MCF 10A (cell line): ENCODE measurements at regions of chr18 and their contacts with region 1.

Region 1: DNA sequence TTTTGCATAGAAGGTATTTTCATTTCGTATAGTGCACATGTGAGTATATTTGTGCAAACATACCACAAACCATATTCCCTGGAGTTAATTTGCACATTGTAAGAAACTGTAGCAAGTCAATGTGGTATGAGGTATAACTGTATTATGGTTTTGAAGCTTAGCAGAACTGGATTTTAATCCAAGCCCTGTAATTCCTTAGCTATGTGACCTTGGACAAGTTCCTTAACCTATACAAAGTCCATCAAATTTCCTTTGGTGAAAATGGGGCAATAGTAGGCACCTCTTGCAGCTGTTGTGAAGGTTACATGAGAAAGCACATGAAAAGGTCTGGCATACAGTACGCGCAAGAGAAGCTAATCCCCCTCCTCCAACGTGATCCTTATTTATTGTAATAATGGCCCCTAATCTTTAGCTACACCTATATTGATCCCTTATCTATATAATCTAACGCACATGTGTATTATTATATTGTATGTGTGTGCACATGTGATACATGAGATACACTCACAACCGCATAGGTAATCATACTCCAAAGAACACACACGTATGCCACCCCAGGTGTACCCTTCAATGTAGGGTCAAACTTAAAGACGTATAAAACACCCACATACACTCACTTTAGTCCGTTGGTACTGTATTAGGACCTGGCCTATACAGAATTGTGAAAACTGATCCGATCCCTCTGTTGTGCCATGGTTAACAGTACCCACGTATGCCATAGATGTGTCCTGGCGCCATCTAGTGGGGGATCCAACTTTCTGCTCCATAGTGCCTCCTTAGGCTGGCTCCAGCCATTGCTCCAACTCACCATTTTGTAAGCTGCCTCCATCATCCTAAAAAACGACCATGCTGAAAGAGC is 402.9 kb upstream of the SLC14A2 start:
- DNase-seq: peak; percentile 89
- H3K4me3 Mint-ChIP-seq: no peak overlapping the region
- H3K27ac Mint-ChIP-seq: no peak overlapping the region
- H3K4me1 Mint-ChIP-seq: no peaks in the 10 kb centered on the region
- H3K27me3 Mint-ChIP-seq: no peaks in the 10 kb centered on the region
- CTCF ChIP-seq: peak; percentile 99

Region 2: GRCh38 chr18:44437603-44438002 is 774.8 kb before region 1 on chr18:
- CTCF ChIA-PET with region 1: interaction called, 4 read pairs
- POLR2A ChIA-PET with region 1: no interaction called
- intact Hi-C with region 1: loop called (anchors 5 kb)
- DNase-seq: no peak
- H3K4me3 Mint-ChIP-seq: no peak overlapping the region
- H3K27ac Mint-ChIP-seq: no peak overlapping the region
- H3K4me1 Mint-ChIP-seq: no peaks in the 10 kb centered on the region
- H3K27me3 Mint-ChIP-seq: no peaks in the 10 kb centered on the region
- CTCF ChIP-seq: no peak

Region 3: GRCh38 chr18:44687421-44687820 is 525.0 kb before region 1 on chr18:
- CTCF ChIA-PET with region 1: interaction called, 15 read pairs
- POLR2A ChIA-PET with region 1: no interaction called
- intact Hi-C with region 1: no loop called
- DNase-seq: no peak
- H3K4me3 Mint-ChIP-seq: no peak overlapping the region
- H3K27ac Mint-ChIP-seq: no peak overlapping the region
- H3K4me1 Mint-ChIP-seq: peaks cover 9% of the 10 kb centered on the region
- H3K27me3 Mint-ChIP-seq: no peaks in the 10 kb centered on the region
- CTCF ChIP-seq: no peak

Region 4: GRCh38 chr18:44816050-44816449 is 396.4 kb before region 1 on chr18:
- CTCF ChIA-PET with region 1: no interaction called
- POLR2A ChIA-PET with region 1: no interaction called
- intact Hi-C with region 1: no loop called
- DNase-seq: no peak
- H3K4me3 Mint-ChIP-seq: no peak overlapping the region
- H3K27ac Mint-ChIP-seq: no peak overlapping the region
- H3K4me1 Mint-ChIP-seq: no peaks in the 10 kb centered on the region
- H3K27me3 Mint-ChIP-seq: no peaks in the 10 kb centered on the region
- CTCF ChIP-seq: no peak

Region 5: DNA sequence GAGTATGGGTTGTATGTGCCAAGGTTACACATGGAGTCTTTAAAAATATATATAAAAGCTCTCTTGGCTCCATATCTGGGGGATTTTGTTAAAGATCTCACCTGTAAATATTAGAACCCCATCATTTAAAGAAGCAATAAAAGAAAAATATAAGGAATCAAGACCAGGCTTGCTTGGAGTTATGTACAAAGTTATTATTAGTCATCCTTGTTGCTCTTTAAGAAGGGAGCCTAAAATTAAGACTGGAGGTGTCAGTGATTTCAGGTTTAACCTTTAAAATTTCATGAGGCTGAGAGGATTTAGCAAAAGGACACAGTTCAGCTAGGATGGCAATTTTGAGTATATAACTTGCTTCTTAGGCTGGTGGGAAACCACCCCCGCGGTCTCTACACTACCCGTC is 350.3 kb before region 1 on chr18:
- CTCF ChIA-PET with region 1: no interaction called
- POLR2A ChIA-PET with region 1: no interaction called
- intact Hi-C with region 1: no loop called
- DNase-seq: no peak
- H3K4me3 Mint-ChIP-seq: no peak overlapping the region
- H3K27ac Mint-ChIP-seq: no peak overlapping the region
- H3K4me1 Mint-ChIP-seq: peaks cover 6% of the 10 kb centered on the region
- H3K27me3 Mint-ChIP-seq: no peaks in the 10 kb centered on the region
- CTCF ChIP-seq: no peak

Region 6: DNA sequence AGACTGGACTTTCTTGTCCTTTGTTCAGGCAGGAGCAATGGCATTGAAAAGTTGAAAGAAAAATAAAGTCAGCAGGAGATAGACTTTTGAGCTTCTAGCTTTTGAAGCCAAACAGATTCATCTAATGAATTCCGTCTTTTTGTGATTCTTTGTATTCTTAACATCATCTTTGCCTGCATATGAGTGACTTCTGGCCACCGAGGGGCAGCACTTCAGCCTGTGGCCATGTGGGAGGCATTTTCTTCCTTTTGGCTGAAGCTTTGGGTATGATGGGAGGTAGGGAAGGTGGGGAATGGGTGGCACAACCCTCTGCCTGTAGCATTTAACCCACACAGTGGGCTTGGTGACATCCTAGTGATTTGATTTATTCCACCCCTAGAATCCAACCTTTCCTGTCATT is 311.1 kb before region 1 on chr18:
- CTCF ChIA-PET with region 1: interaction called, 11 read pairs
- POLR2A ChIA-PET with region 1: no interaction called
- intact Hi-C with region 1: loop called (anchors 1 kb)
- DNase-seq: peak; percentile 32
- H3K4me3 Mint-ChIP-seq: no peak overlapping the region
- H3K27ac Mint-ChIP-seq: no peak overlapping the region
- H3K4me1 Mint-ChIP-seq: peaks cover 15% of the 10 kb centered on the region
- H3K27me3 Mint-ChIP-seq: no peaks in the 10 kb centered on the region
- CTCF ChIP-seq: peak; percentile 10

Region 7: DNA sequence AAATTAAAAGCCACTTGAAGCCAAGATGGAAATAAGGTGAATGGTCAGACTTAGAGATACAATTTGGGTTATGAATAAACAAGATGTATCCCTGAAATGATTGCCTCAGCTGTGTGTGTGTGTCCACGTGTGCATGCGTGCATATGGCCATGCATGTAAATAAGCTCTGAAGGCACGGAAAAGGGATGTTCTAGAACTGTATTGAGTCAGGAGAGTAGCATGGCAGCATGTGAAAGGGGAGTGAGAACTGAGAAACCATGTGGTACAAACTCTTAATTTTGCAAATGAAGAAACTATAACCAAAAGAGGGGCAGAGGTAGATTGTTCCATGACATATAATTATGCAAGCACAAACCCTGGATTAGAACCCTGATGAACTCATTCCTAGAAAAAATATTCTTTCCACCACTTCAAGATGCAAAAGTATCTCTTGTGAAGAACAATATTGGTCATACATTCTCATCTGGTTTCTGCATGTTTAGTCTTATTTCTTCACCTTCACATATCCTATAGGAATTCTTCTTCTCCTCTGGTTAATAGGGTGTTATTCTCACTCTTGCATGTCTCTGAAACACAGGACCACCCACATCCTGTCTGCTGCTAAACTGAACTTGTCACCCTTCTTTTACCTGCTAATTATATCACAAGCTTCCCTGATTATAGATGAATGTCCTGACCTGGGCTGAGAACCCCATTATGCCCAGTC is 75.9 kb before region 1 on chr18:
- CTCF ChIA-PET with region 1: interaction called, 10 read pairs
- POLR2A ChIA-PET with region 1: no interaction called
- intact Hi-C with region 1: no loop called
- DNase-seq: no peak
- H3K4me3 Mint-ChIP-seq: no peak overlapping the region
- H3K27ac Mint-ChIP-seq: no peak overlapping the region
- H3K4me1 Mint-ChIP-seq: no peaks in the 10 kb centered on the region
- H3K27me3 Mint-ChIP-seq: peaks cover 24% of the 10 kb centered on the region
- CTCF ChIP-seq: no peak